T-cell (primary cell): ENCODE measurements at regions of chr6 and their contacts with region 1.

Region 1: GRCh38 chr6:1496836-1497760 is 107.7 kb downstream of the FOXF2 start:
- DNase-seq: no peak
- ATAC-seq: no peak
- H3K4me3 ChIP-seq: no peak overlapping the region
- H3K4me3 Mint-ChIP-seq: no peak overlapping the region
- H3K27ac ChIP-seq: no peak overlapping the region
- H3K27ac Mint-ChIP-seq: no peak overlapping the region
- H3K4me1 ChIP-seq: no peaks in the 10 kb centered on the region
- H3K4me1 Mint-ChIP-seq: no peaks in the 10 kb centered on the region
- H3K27me3 ChIP-seq: peaks cover 0 to 15% of the 10 kb centered on the region in 2 experiments
- H3K27me3 Mint-ChIP-seq: peaks cover 8 to 16% of the 10 kb centered on the region in 2 donors

Region 2: GRCh38 chr6:273551-274058 is 1223.5 kb before region 1 on chr6:
- CTCF ChIA-PET with region 1: interaction called in 1 of 2 experiments, 12 read pairs
- POLR2A ChIA-PET with region 1: no interaction called
- DNase-seq: no peak
- ATAC-seq: no peak
- H3K4me3 ChIP-seq: no peak overlapping the region
- H3K4me3 Mint-ChIP-seq: no peak overlapping the region
- H3K27ac ChIP-seq: no peak overlapping the region
- H3K27ac Mint-ChIP-seq: no peak overlapping the region
- H3K4me1 ChIP-seq: peaks cover 4% of the 10 kb centered on the region in 2 experiments
- H3K4me1 Mint-ChIP-seq: peaks cover 22 to 35% (median 29%) of the 10 kb centered on the region in 3 donors
- H3K27me3 ChIP-seq: no peaks in the 10 kb centered on the region
- H3K27me3 Mint-ChIP-seq: no peaks in the 10 kb centered on the region

Region 3: DNA sequence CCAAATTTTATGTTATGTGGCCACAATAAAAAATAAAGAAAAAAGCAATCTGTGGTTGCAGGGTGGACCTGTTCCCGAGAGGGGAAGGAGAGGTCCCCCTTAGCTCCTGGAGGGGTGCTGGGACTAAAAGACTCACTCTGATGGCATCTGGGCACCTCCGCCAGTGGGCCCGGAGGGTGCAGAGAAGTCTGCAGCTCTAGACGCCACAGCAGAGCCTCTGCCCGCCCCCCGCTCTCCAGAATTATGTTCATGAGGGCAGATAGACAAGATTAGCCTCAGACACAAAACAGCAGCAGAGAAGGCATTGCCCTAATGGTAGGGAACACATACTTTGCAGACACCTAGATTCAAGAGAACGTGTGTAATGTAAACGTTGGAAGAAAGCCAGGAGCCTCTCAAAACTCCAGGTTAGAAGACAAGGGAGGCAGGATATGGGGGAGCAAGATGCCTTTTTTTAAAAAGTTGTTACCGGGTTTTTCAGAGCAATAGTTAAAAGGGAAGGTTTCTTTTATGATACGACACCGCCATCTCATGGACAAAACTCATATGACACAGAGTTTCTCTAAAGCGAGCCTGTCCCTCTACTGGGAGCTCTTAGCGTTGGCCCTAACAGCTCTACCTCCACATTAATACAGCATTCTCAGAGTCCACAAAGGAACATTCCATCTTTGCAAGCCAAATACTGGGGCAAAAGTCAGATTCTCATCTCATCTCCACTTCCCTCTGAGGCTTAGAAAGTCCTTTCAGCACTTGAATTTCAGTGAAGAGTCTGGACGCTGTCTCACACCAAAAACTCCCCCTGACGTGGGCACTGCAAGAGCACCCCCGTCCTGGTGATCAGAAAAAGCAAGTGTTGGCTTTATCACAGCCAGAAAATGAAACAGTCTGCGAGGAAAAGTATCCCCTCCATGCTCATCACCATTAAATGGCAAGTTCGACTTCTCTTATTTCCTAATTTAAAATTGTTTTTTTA is 60.5 kb before region 1 on chr6:
- CTCF ChIA-PET with region 1: no interaction called
- POLR2A ChIA-PET with region 1: no interaction called
- DNase-seq: peak in 28 of 35 experiments; percentile 5 to 72 (median 34)
- ATAC-seq: peak; percentile 44 to 73 (median 70)
- H3K4me3 ChIP-seq: no peak overlapping the region
- H3K4me3 Mint-ChIP-seq: no peak overlapping the region
- H3K27ac ChIP-seq: no peak overlapping the region
- H3K27ac Mint-ChIP-seq: no peak overlapping the region
- H3K4me1 ChIP-seq: no peaks in the 10 kb centered on the region
- H3K4me1 Mint-ChIP-seq: peaks cover 0 to 5% (median 3%) of the 10 kb centered on the region in 3 donors
- H3K27me3 ChIP-seq: peaks cover 6 to 33% of the 10 kb centered on the region in 2 experiments
- H3K27me3 Mint-ChIP-seq: peaks cover 40 to 57% of the 10 kb centered on the region in 2 donors